GM10248 (cell line): ENCODE measurements at regions of chr5 and their contacts with region 1.

Region 1: GRCh38 chr5:141650851-141651727 is at the start of gene FCHSD1:
- DNase-seq: peak; percentile 99
- CTCF ChIP-seq: no peak

Region 2: GRCh38 chr5:141272906-141273305 is 378.2 kb before region 1 on chr5:
- CTCF ChIA-PET with region 1: no interaction called
- POLR2A ChIA-PET with region 1: no interaction called
- DNase-seq: no peak
- CTCF ChIP-seq: no peak

Region 3: GRCh38 chr5:141320225-141321169 is 330.6 kb before region 1 on chr5 and contains the start of gene TAF7:
- CTCF ChIA-PET with region 1: no interaction called
- POLR2A ChIA-PET with region 1: no interaction called
- DNase-seq: peak; percentile 93
- CTCF ChIP-seq: peak; percentile 95

Region 4: GRCh38 chr5:141420855-141421496 is 230.1 kb before region 1 on chr5 and contains the start of gene PCDHGA11:
- CTCF ChIA-PET with region 1: no interaction called
- POLR2A ChIA-PET with region 1: interaction called, 10 read pairs
- DNase-seq: peak; percentile 69
- CTCF ChIP-seq: peak; percentile 71

Region 5: GRCh38 chr5:141636413-141637122 is 14.5 kb before region 1 on chr5 and contains the starts of genes HDAC3 and RELL2:
- CTCF ChIA-PET with region 1: interaction called, 26 read pairs
- POLR2A ChIA-PET with region 1: interaction called, 4 read pairs
- DNase-seq: peak; percentile 95
- CTCF ChIP-seq: no peak

Region 6: GRCh38 chr5:141664732-141665461 is 13.8 kb after region 1 on chr5:
- CTCF ChIA-PET with region 1: interaction called, 13 read pairs
- POLR2A ChIA-PET with region 1: no interaction called
- DNase-seq: peak; percentile 88
- CTCF ChIP-seq: peak; percentile 86